Activated B cell treated with CpG ODN at 0.5 μM for 24 hours (primary cell): ENCODE measurements at regions of chr19 and their contacts with region 1.

Region 1: GRCh38 chr19:34999498-35000341 is at the start of gene GRAMD1A:
- DNase-seq: peak; percentile 77
- ATAC-seq: peak; percentile 60
- H3K4me3 Mint-ChIP-seq: peak within 1 kb of the TSS; percentile 87
- H3K27ac Mint-ChIP-seq: peak within 1 kb of the TSS; percentile 84
- H3K4me1 Mint-ChIP-seq: peaks cover 63% of the 10 kb centered on the region
- H3K27me3 Mint-ChIP-seq: no peaks in the 10 kb centered on the region
- CTCF ChIP-seq: no peak
- total RNA-seq, gene GRAMD1A: 52.9 and 54.4 TPM in 2 replicates

Region 2: DNA sequence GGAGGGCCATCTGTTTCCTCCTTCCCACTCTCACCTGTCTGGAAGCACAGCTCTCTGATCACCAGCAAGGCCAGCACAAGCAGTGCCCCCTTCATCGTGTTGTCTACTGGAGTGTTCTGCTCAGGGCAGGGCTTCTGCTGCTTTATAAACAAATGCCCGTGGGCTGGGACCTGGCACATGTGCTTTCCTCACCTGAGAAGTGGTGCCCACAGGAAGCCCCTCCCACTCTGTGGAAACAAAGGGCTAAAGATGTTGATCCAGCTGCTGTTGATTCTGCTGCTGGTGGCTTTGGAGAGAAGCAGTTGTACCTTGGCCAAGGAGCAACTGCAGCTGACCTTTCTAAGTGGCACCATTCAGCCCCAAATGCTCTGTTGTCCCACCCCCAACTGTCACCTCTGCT is 292.1 kb before region 1 on chr19:
- CTCF ChIA-PET with region 1: no interaction called
- POLR2A ChIA-PET with region 1: no interaction called
- intact Hi-C with region 1: no loop called
- DNase-seq: no peak
- ATAC-seq: no peak
- H3K4me3 Mint-ChIP-seq: no peak overlapping the region
- H3K27ac Mint-ChIP-seq: no peak overlapping the region
- H3K4me1 Mint-ChIP-seq: no peaks in the 10 kb centered on the region
- H3K27me3 Mint-ChIP-seq: peaks cover 24% of the 10 kb centered on the region
- CTCF ChIP-seq: no peak

Region 3: DNA sequence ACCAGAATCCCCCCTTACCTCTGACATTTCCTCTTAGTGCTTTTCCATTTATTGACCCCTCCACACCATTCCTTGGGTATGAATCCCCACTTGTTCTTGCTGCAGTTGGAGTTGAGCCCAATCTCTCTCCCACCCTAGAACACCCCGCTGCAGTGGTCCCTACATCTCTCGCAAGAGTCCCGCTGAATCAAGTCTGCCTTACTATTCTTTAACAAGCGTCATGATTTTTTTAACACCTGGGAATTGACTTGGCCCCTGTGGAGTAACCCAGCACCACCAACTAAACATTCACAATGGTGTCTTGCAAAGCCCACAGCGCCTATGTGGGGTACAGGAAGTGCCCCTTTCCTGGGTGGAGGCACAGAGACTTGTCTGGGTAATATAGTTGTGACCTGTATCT is 213.5 kb before region 1 on chr19:
- CTCF ChIA-PET with region 1: no interaction called
- POLR2A ChIA-PET with region 1: no interaction called
- intact Hi-C with region 1: no loop called
- DNase-seq: no peak
- ATAC-seq: no peak
- H3K4me3 Mint-ChIP-seq: no peak overlapping the region
- H3K27ac Mint-ChIP-seq: no peak overlapping the region
- H3K4me1 Mint-ChIP-seq: peaks cover 2% of the 10 kb centered on the region
- H3K27me3 Mint-ChIP-seq: peaks cover 9% of the 10 kb centered on the region
- CTCF ChIP-seq: no peak

Region 4: DNA sequence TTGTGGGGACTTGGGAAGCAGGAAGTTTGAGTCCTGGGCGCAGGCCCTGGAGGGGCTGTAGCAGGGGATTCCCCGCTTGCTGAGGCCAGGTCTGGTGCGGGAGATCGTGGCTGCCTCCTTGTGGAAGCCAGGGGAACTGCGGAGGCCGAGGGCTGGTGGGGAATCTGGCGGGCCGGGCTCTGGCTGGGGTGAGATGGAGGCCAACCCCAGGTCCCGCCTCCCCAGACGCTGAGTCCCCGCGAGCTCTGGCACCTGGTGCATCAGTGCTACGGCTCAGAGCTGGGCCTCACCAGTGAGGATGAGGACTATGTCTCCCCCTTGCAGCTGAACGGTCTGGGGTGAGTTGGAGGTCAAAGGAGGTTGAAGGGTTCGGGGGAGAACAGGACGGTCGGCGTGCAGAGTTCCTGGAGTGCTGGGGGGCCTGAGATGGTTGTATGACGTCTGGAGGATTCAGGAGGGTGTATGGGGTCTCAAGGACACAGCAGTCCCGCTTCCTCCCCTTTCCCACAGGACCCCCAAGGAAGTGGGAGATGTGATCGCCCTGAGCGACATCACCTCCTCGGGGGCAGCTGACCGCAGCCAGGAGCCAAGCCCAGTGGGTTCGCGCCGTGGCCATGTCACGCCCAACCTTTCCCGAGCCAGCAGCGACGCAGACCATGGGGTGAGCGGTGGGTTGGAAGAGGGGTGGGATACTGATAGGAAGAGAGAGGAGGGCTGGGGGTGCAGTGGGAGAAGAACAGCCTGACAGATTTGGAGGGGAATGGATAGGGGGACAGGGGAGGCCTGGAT is 13.5 kb after region 1 on chr19:
- CTCF ChIA-PET with region 1: interaction called, 8 read pairs
- POLR2A ChIA-PET with region 1: interaction called, 12 read pairs
- intact Hi-C with region 1: no loop called
- DNase-seq: peak; percentile 74
- ATAC-seq: peak; percentile 96
- H3K4me3 Mint-ChIP-seq: no peak overlapping the region
- H3K27ac Mint-ChIP-seq: no peak overlapping the region
- H3K4me1 Mint-ChIP-seq: peaks cover 31% of the 10 kb centered on the region
- H3K27me3 Mint-ChIP-seq: no peaks in the 10 kb centered on the region
- CTCF ChIP-seq: peak; percentile 61

Region 5: DNA sequence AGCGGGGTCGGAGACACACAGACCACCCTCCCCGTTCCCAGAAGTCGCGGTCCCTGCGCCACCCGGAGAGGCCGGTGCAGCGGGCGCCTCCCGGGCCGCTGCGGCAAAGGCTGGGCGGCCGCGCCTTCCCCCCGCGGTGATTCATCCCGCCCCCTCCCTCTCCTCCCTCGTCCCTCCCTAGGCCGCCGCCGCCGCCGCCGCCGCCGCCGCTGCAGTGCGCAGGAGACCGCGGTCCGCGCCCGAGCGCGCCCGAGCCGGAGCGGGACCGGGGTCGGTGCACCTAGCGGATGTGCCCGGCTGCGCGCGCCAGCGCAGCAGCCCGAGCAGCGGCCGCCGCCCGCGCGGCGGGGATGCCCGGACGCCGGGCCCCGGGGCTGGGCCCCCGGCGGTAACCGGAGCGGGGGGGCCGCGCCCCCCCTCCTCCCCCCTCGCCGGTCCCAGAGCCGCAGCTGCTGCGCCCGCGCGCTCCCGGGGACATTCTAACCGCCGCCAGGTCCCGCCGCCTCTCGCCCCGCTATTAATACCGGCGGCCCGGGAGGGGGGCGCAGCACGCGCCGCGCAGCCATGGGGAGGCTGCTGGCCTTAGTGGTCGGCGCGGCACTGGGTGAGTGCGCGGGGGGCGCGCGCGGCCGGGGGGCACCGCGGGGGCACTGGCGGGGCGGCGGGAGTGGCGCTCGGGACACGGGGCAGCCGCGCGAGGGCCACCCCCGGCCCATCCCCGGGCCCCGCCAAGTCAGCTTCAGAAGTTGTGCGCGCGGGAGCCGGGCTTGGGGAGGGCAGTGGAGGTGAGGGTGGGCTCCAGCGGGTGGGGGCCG is 30.7 kb after region 1 on chr19 and contains the start of gene SCN1B:
- CTCF ChIA-PET with region 1: no interaction called
- POLR2A ChIA-PET with region 1: interaction called, 12 read pairs
- intact Hi-C with region 1: no loop called
- DNase-seq: no peak
- ATAC-seq: peak; percentile 59
- H3K4me3 Mint-ChIP-seq: peak within 1 kb of the TSS; percentile 72
- H3K27ac Mint-ChIP-seq: no peak within 1 kb of the TSS
- H3K4me1 Mint-ChIP-seq: peaks cover 5% of the 10 kb centered on the region
- H3K27me3 Mint-ChIP-seq: peaks cover 22% of the 10 kb centered on the region
- CTCF ChIP-seq: no peak
- total RNA-seq, gene SCN1B: 0.34 and 0.47 TPM in 2 replicates